Dendritic cell treated with granulocyte-macrophage colony-stimulating factor and Interleukin-4, amounts not matched to agents 40 ng/mL and 50 ng/mL, for 4 days (primary cell): ENCODE measurements at regions of chr11 and their contacts with region 1.

Region 1: GRCh38 chr11:57667736-57668435 is at the start of gene ZDHHC5:
- H3K4me3 Mint-ChIP-seq: peak within 1 kb of the TSS; percentile 84
- H3K27ac Mint-ChIP-seq: peak within 1 kb of the TSS; percentile 97
- H3K4me1 Mint-ChIP-seq: peaks cover 40% of the 10 kb centered on the region
- H3K27me3 Mint-ChIP-seq: no peaks in the 10 kb centered on the region

Region 2: DNA sequence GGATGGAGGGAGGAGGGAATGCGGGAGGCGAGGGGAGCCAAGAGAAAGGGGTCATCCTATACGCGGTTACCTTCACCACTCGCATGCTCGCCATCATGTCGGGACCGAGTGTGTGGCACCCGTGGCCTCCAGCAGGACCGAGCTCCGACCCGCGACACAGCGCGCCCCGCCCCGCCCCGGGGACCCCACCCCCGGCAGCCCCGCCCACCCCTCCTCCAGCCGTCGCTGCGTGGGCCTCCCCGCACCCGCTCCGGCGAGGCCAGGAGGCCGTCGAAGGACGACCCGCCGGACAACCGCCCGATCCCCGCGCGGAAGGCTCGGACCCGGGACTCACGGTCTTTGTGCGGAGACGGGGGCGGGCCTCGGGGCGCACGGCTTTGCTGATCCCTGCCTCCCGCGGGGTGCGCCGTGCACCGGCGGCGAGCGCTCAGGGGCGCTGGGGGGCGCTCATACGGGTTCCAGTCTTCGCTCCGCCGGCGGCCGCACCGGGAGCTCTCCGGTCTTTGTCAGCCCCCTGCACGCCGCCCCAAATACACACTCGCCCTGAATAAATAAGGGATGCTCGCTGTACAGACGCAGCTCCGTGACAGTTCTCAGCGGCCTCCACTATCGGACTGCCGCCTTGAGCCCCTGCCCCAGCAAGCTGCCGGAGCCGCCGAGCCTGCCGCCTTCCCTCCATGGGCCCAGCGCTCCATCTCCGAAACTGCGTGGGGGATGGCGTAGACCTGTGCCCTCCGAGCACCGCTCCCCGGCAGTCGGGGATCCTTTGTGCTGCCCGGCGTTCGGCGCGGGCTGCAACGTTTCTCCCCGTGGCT is 100.2 kb before region 1 on chr11 and contains the start of gene UBE2L6:
- intact Hi-C with region 1: loop called (anchors 1 kb)
- H3K4me3 Mint-ChIP-seq: peak within 1 kb of the TSS; percentile 91
- H3K27ac Mint-ChIP-seq: peak within 1 kb of the TSS; percentile 82
- H3K4me1 Mint-ChIP-seq: peaks cover 68% of the 10 kb centered on the region
- H3K27me3 Mint-ChIP-seq: no peaks in the 10 kb centered on the region

Region 3: GRCh38 chr11:57657194-57658022 is 10.5 kb before region 1 on chr11 and contains the start of gene CLP1:
- intact Hi-C with region 1: loop called (anchors 1 kb)
- H3K4me3 Mint-ChIP-seq: peak within 1 kb of the TSS; percentile 99
- H3K27ac Mint-ChIP-seq: peak within 1 kb of the TSS; percentile 92
- H3K4me1 Mint-ChIP-seq: peaks cover 51% of the 10 kb centered on the region
- H3K27me3 Mint-ChIP-seq: no peaks in the 10 kb centered on the region

Region 4: DNA sequence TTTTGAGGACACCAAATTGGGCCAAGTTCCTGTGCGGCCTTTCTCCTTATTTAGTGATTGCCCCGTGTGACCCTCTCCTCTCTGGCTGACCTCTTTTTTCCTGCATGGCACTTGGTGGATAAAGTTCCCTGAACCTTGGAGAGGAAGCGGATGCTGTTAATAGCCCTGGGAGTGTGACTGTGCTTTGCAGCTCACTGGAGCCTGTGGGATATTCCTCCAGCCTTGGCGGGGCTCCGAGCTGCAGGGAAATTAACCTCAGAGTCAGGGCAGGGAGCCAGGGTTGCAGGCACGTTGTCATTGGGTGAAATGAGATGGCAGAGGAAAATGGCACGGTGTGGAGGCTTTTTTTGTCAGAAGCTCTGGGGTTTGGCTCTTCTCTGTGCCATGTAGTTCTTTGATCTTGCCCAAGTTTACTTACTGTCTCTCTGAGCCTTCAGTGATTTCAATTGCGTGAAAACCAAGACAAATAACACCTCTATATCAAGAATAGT is 356.8 kb after region 1 on chr11:
- intact Hi-C with region 1: no loop called
- H3K4me3 Mint-ChIP-seq: no peak overlapping the region
- H3K27ac Mint-ChIP-seq: no peak overlapping the region
- H3K4me1 Mint-ChIP-seq: peaks cover 5% of the 10 kb centered on the region
- H3K27me3 Mint-ChIP-seq: no peaks in the 10 kb centered on the region

Region 5: DNA sequence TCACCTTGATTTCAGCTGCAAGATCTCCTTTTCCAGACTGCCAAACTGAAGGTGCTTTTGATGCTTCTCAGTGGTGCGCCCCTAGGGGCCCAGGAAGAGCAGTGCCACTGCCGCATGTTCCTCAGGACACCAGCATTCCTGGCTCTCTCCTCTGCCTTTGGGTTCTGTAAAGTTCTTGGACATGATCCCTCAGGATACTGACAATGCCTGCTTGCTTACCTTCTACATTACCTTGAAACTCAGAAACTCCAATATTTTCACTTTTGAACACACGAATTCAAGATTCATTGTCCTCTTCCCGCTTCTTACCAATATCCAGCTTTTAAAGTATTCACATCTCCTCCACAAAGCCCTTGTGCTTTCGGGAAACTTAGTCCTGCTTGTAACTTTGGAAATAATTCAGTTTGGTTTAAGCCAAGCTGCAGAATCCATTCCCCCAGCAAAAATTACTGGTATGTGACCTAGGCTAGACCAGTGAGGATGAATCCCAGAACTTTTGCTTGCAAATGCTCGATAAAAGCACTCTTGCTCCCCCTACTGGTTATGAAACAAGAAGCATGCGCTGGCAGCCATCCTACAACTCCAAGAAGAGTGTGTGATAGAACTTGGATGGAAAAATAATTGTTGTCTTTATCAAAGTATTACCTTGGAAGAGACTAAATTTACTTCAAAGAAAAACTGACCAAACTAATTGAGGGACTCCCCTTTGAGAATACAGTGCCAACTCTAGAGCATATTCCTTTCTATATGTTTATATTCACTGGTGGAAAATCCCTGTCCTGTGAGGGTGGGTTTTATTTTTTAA is 856.5 kb after region 1 on chr11:
- intact Hi-C with region 1: loop called (anchors 10 kb)
- H3K4me3 Mint-ChIP-seq: peak overlapping the region; percentile 60
- H3K27ac Mint-ChIP-seq: peak overlapping the region; percentile 51
- H3K4me1 Mint-ChIP-seq: peaks cover 31% of the 10 kb centered on the region
- H3K27me3 Mint-ChIP-seq: no peaks in the 10 kb centered on the region